ENCODE measurements at regions of chr2 and their contacts with region 1.

Region 1: GRCh38 chr2:241149925-241150659 is at the start of gene PPP1R7:
- H3K4me3 ChIP-seq: peak within 1 kb of the TSS; percentile 94
- H3K27ac ChIP-seq: peak within 1 kb of the TSS; percentile 73; the same call in 1 of the 2 replicates
- H3K4me1 ChIP-seq: no peaks in the 10 kb centered on the region
- CTCF ChIP-seq: peak; percentile 58

Region 2: GRCh38 chr2:241102239-241102803 is 47.8 kb before region 1 on chr2 and contains the start of gene MTERF4:
- CTCF ChIA-PET with region 1: no interaction called
- POLR2A ChIA-PET with region 1: interaction called, 13 read pairs
- H3K4me3 ChIP-seq: peak within 1 kb of the TSS; percentile 100
- H3K27ac ChIP-seq: peak within 1 kb of the TSS; percentile 73
- H3K4me1 ChIP-seq: peaks cover 4% of the 10 kb centered on the region; the same call in 1 of the 2 replicates
- CTCF ChIP-seq: peak; percentile 53

Measured in HEK293 (cell line).